K562 (cell line): ENCODE measurements at regions of chr3 and their contacts with region 1.

Region 1: DNA sequence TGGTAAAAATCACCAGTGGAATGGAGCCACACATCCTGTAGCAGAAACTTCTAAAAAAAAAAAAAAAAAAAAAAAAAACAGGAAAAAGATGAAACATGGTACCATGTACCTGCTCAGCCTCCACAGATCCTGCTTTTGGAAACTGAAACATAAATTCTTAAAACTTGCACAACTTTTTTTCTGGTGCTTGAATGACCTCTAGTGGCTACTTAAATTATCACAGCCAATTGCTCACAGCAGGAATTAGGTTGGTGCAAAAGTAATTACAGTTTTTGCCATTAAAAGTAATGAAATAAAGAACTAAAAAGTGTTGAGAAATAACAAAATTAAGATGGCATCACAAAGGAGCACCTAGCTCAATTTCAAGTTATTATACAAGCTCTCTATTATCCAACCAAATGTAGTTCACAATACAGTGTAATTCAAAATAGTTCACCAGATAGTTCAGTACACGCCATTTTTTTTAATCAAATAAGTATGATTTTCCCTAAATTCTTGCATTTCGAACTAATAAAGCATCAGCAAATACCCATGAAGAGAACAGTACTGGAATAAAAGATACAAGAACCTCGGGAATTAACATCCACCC is 80.6 kb downstream of the ULK4 start:
- DNase-seq: peak in 3 of 4 experiments; percentile 23 to 61 (median 25)
- ATAC-seq: no peak
- H3K4me3 ChIP-seq: no peak overlapping the region
- H3K27ac ChIP-seq: no peak overlapping the region
- H3K4me1 ChIP-seq: no peaks in the 10 kb centered on the region
- H3K27me3 ChIP-seq: peaks cover 0 to 6% of the 10 kb centered on the region in 2 experiments; a peak in 2 of 5 replicates
- CTCF ChIP-seq: peak; percentile 55 to 89 (median 56)
- EP300 ChIP-seq: no peak
- POLR2A ChIP-seq: no peak
- RAD21 ChIP-seq: peak; percentile 76 to 84

Region 2: GRCh38 chr3:40329071-40329470 is 1552.3 kb before region 1 on chr3:
- CTCF ChIA-PET with region 1: interaction called, 3 read pairs
- POLR2A ChIA-PET with region 1: no interaction called
- in situ Hi-C with region 1: loop called (anchors 5 kb)
- intact Hi-C with region 1: loop called (anchors 5 kb)
- DNase-seq: no peak
- ATAC-seq: no peak
- H3K4me3 ChIP-seq: no peak overlapping the region
- H3K27ac ChIP-seq: no peak overlapping the region
- H3K4me1 ChIP-seq: peaks cover 0 to 11% of the 10 kb centered on the region in 2 experiments; a peak in 3 of 5 replicates
- H3K27me3 ChIP-seq: no peaks in the 10 kb centered on the region
- CTCF ChIP-seq: no peak
- EP300 ChIP-seq: no peak
- POLR2A ChIP-seq: no peak
- RAD21 ChIP-seq: no peak

Region 3: GRCh38 chr3:41075975-41076374 is 805.4 kb before region 1 on chr3:
- CTCF ChIA-PET with region 1: no interaction called
- POLR2A ChIA-PET with region 1: no interaction called
- in situ Hi-C with region 1: no loop called
- intact Hi-C with region 1: no loop called
- DNase-seq: peak in 3 of 4 experiments; percentile 20 to 47 (median 40)
- ATAC-seq: peak; percentile 91
- H3K4me3 ChIP-seq: no peak overlapping the region
- H3K27ac ChIP-seq: no peak overlapping the region
- H3K4me1 ChIP-seq: peaks cover 0 to 5% of the 10 kb centered on the region in 2 experiments; a peak in 2 of 5 replicates
- H3K27me3 ChIP-seq: peaks cover 5 to 24% of the 10 kb centered on the region in 2 experiments; a peak in 3 of 5 replicates
- CTCF ChIP-seq: peak; percentile 11 to 40 (median 27); a peak in 2 of 6 replicates
- EP300 ChIP-seq: no peak
- POLR2A ChIP-seq: no peak
- RAD21 ChIP-seq: peak; percentile 58 to 62

Region 4: DNA sequence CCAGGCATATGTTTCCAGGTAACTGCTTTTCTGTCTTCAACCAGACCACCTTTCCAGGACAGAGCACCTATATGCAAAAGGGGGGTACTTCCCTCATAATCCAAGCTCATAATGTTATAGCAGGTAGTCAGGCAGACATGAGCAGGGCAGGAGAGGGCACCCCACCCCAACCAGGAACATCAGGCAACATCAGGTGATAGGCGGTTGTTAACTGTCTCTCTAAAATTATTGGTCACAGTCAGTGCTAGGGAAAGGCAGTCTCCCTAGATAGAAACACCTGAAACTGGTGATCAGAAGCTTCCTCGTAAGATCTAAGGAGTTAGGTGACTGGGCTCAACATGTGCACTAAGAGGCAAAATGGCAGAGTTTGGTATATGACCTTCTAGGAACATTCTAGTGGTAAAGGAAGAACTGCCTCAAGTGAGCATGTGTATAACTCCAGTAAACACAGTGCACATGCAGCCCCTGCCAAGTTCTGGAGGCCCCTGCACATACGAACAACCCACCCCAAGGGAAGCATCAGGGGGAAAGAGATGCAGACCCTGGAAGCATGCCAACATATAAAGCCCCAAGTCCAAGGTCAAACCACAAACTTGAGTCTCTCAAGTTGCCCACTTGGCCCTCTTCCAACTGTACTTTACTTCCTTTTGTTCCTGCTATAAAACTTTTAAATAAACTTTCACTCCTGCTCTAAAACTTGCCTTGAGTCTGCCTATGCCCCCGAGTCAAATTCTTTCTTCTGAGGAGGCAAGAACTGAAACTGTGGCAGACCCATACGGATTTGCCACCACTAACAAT is 190.4 kb before region 1 on chr3:
- CTCF ChIA-PET with region 1: no interaction called
- POLR2A ChIA-PET with region 1: no interaction called
- in situ Hi-C with region 1: no loop called
- intact Hi-C with region 1: loop called (anchors 1 kb)
- DNase-seq: no peak
- ATAC-seq: no peak
- H3K4me3 ChIP-seq: no peak overlapping the region
- H3K27ac ChIP-seq: no peak overlapping the region
- H3K4me1 ChIP-seq: no peaks in the 10 kb centered on the region
- H3K27me3 ChIP-seq: no peaks in the 10 kb centered on the region; a peak in 1 of 5 replicates
- CTCF ChIP-seq: no peak
- EP300 ChIP-seq: no peak
- POLR2A ChIP-seq: no peak
- RAD21 ChIP-seq: no peak